ENCODE measurements at regions of chr10 and their contacts with region 1.

Region 1: DNA sequence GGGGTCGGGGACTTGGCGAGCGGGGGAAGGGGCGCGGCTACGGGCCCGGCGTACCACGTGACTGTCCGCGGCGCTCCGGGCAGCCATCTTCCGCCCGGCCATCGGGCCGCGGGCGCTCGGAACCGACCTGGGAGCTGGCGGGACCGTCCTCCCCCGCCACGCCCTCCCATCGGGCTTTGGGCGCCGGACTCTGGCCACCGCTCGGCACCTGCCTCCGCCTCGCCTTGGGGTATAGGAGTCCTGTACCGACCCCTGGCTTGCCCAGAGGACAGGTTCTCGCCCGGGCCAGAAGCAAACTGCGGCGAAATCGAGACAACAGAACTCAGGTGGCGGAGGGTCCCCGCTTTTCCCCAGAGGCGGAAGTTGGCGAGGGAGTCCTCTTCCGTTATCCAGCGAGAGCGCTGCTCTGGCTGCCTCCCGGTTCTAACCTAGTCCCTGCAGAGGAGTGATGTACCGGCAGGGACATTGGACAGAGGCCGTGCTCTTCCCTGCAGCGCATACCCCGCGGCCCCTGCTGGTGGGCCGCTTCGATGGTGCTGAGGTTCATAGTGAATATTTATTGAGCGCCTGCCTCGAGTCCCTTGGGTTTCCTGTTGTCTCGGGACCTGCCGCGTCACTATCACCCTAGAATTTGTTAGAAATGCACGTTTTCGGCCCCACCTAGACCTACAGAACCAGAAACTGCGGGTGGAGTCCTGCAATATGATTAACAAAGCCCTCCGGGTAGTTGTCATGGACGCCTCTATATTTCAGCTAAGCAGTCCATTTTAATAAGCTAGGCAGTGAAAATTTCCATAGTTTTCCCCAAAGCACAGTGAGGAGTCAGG is 1.3 kb upstream of the SGMS1 start:
- DNase-seq: peak; percentile 87 to 94
- H3K4me3 ChIP-seq: peak overlapping the region; percentile 88
- H3K4me3 Mint-ChIP-seq: peak overlapping the region; percentile 78
- H3K27ac Mint-ChIP-seq: peak overlapping the region; percentile 93
- H3K4me1 ChIP-seq: peaks cover 11% of the 10 kb centered on the region; the same call in 1 of the 2 replicates
- H3K4me1 Mint-ChIP-seq: peaks cover 13% of the 10 kb centered on the region
- H3K27me3 ChIP-seq: no peaks in the 10 kb centered on the region
- H3K27me3 Mint-ChIP-seq: no peaks in the 10 kb centered on the region
- CTCF ChIP-seq: peak; percentile 78 to 82

Region 2: GRCh38 chr10:50417886-50418830 is 206.9 kb before region 1 on chr10:
- CTCF ChIA-PET with region 1: no interaction called
- POLR2A ChIA-PET with region 1: interaction called, 3 read pairs
- intact Hi-C with region 1: loop called (anchors 1 kb)
- DNase-seq: peak; percentile 87
- H3K4me3 ChIP-seq: peak overlapping the region; percentile 45
- H3K4me3 Mint-ChIP-seq: peak overlapping the region; percentile 82
- H3K27ac Mint-ChIP-seq: peak overlapping the region; percentile 88
- H3K4me1 ChIP-seq: peaks cover 21% of the 10 kb centered on the region
- H3K4me1 Mint-ChIP-seq: peaks cover 36% of the 10 kb centered on the region
- H3K27me3 ChIP-seq: no peaks in the 10 kb centered on the region
- H3K27me3 Mint-ChIP-seq: no peaks in the 10 kb centered on the region
- CTCF ChIP-seq: no peak

Region 3: DNA sequence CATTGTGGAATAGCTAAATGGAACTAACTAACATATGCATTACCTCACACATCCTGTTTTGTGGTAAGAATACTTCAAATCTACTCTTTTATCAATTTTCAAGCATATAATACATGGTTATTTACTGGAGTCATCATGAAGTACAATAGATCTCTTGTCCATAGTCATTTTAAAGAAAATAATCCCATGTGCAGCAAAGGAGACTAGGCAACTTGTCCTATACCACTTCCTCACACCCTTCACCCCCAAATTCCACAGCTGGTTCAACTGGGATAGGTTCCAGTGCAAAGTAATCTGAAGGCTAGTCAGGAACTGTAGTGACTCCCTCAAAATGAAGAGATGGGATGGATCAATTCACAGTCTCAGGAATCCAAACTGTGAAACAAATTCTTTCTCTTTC is 177.4 kb before region 1 on chr10:
- CTCF ChIA-PET with region 1: no interaction called
- POLR2A ChIA-PET with region 1: no interaction called
- intact Hi-C with region 1: no loop called
- DNase-seq: no peak
- H3K4me3 ChIP-seq: no peak overlapping the region
- H3K4me3 Mint-ChIP-seq: no peak overlapping the region
- H3K27ac Mint-ChIP-seq: no peak overlapping the region
- H3K4me1 ChIP-seq: no peaks in the 10 kb centered on the region
- H3K4me1 Mint-ChIP-seq: no peaks in the 10 kb centered on the region
- H3K27me3 ChIP-seq: no peaks in the 10 kb centered on the region
- H3K27me3 Mint-ChIP-seq: no peaks in the 10 kb centered on the region
- CTCF ChIP-seq: no peak

Region 4: GRCh38 chr10:50561816-50562215 is 63.3 kb before region 1 on chr10:
- CTCF ChIA-PET with region 1: interaction called, 5 read pairs
- POLR2A ChIA-PET with region 1: no interaction called
- intact Hi-C with region 1: loop called (anchors 1 kb)
- DNase-seq: peak in 1 of 2 experiments; percentile 58
- H3K4me3 ChIP-seq: no peak overlapping the region
- H3K4me3 Mint-ChIP-seq: no peak overlapping the region
- H3K27ac Mint-ChIP-seq: no peak overlapping the region
- H3K4me1 ChIP-seq: peaks cover 6% of the 10 kb centered on the region
- H3K4me1 Mint-ChIP-seq: peaks cover 17% of the 10 kb centered on the region
- H3K27me3 ChIP-seq: no peaks in the 10 kb centered on the region
- H3K27me3 Mint-ChIP-seq: no peaks in the 10 kb centered on the region
- CTCF ChIP-seq: peak; percentile 92 to 95

Region 5: GRCh38 chr10:50605269-50606263 is 19.5 kb before region 1 on chr10:
- CTCF ChIA-PET with region 1: interaction called, 6 read pairs
- POLR2A ChIA-PET with region 1: interaction called, 4 read pairs
- intact Hi-C with region 1: loop called (anchors 1 kb)
- DNase-seq: peak; percentile 62 to 73
- H3K4me3 ChIP-seq: no peak overlapping the region
- H3K4me3 Mint-ChIP-seq: peak overlapping the region; percentile 42
- H3K27ac Mint-ChIP-seq: peak overlapping the region; percentile 66
- H3K4me1 ChIP-seq: peaks cover 55% of the 10 kb centered on the region
- H3K4me1 Mint-ChIP-seq: peaks cover 57% of the 10 kb centered on the region
- H3K27me3 ChIP-seq: no peaks in the 10 kb centered on the region
- H3K27me3 Mint-ChIP-seq: no peaks in the 10 kb centered on the region
- CTCF ChIP-seq: no peak

Region 6: GRCh38 chr10:50636618-50637579 is 11.8 kb after region 1 on chr10:
- CTCF ChIA-PET with region 1: no interaction called
- POLR2A ChIA-PET with region 1: no interaction called
- intact Hi-C with region 1: no loop called
- DNase-seq: no peak
- H3K4me3 ChIP-seq: no peak overlapping the region
- H3K4me3 Mint-ChIP-seq: no peak overlapping the region
- H3K27ac Mint-ChIP-seq: no peak overlapping the region
- H3K4me1 ChIP-seq: no peaks in the 10 kb centered on the region
- H3K4me1 Mint-ChIP-seq: no peaks in the 10 kb centered on the region
- H3K27me3 ChIP-seq: no peaks in the 10 kb centered on the region
- H3K27me3 Mint-ChIP-seq: no peaks in the 10 kb centered on the region
- CTCF ChIP-seq: no peak

Region 7: GRCh38 chr10:50653142-50653541 is 28.1 kb after region 1 on chr10:
- CTCF ChIA-PET with region 1: interaction called, 4 read pairs
- POLR2A ChIA-PET with region 1: interaction called, 4 read pairs
- intact Hi-C with region 1: loop called (anchors 1 kb)
- DNase-seq: peak in 1 of 2 experiments; percentile 56
- H3K4me3 ChIP-seq: no peak overlapping the region
- H3K4me3 Mint-ChIP-seq: no peak overlapping the region
- H3K27ac Mint-ChIP-seq: no peak overlapping the region
- H3K4me1 ChIP-seq: peaks cover 26% of the 10 kb centered on the region; the same call in 1 of the 2 replicates
- H3K4me1 Mint-ChIP-seq: no peaks in the 10 kb centered on the region
- H3K27me3 ChIP-seq: no peaks in the 10 kb centered on the region
- H3K27me3 Mint-ChIP-seq: no peaks in the 10 kb centered on the region
- CTCF ChIP-seq: peak; percentile 59 to 84

Region 8: GRCh38 chr10:51405580-51406351 is 780.7 kb after region 1 on chr10:
- CTCF ChIA-PET with region 1: no interaction called
- POLR2A ChIA-PET with region 1: no interaction called
- intact Hi-C with region 1: no loop called
- DNase-seq: no peak
- H3K4me3 ChIP-seq: no peak overlapping the region
- H3K4me3 Mint-ChIP-seq: no peak overlapping the region
- H3K27ac Mint-ChIP-seq: no peak overlapping the region
- H3K4me1 ChIP-seq: no peaks in the 10 kb centered on the region
- H3K4me1 Mint-ChIP-seq: no peaks in the 10 kb centered on the region
- H3K27me3 ChIP-seq: no peaks in the 10 kb centered on the region
- H3K27me3 Mint-ChIP-seq: peaks cover 6% of the 10 kb centered on the region
- CTCF ChIP-seq: no peak

Measured in Caco-2 (cell line).